Head of caudate nucleus (tissue), 42 donors: ENCODE measurements at regions of chr6 and their contacts with region 1.

Region 1: GRCh38 chr6:165439928-165440554 is 130.6 kb upstream of the C6orf118 start:
- DNase-seq: no peak

Region 2: DNA sequence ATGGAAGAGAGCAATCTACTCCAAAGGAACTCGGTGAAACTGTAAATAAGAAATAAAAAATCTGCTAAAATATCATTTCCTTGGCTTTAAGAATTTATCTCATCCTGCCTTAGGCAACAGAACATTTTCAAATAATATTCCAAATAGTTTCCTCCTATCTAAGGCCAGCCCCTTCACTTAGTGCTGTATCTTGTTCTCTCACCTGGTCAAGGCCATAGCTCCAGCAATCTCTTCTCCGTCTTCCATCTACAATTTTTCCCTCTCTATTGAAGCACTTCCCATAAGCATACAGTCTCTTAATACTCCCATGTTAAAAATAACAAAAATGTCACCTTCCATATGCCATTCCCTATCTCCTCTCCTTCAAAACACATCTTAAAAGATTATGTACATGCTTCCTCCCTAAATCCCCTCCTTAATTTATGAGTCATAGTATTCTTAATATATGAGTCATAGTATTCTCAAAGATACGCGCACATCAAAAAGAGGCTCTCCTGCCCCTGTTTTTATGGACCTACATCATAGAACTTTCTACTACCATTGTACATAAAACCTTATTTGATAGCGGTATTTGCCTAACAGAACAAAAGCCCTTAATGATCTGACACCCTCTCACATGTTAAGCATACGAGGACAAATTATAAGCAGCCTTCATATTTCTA is 76.1 kb after region 1 on chr6:
- intact Hi-C with region 1: no loop called
- DNase-seq: no peak

Region 3: DNA sequence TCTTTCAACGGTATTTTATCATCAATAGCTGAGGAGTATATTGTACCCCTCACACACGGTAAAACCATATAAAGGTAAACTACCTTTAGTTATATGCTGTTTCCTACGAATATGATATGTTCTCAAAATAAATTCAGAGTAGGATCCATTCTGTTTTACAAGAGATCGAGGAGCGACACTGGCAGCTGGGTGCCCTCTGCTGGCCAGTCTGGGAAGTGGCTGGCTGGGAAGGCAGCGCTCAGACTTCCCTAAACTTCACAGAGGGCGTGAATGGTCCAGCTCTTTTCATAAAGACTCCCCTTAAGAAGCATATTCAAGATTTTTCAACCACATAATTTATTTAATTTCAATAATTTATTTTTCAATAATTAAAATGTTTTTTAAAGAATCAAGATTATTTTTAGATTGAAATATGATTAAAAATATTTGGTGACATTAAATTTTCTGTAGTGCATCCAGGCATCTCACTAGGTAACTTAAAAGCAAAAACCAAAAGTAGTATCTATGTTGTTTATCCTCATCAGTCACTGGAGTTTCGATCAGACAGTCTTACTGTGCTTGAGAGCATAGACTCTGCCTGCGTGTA is 410.5 kb after region 1 on chr6:
- intact Hi-C with region 1: loop called (anchors 2 kb)
- DNase-seq: peak; percentile 66 to 93 (median 86)